Thyroid gland (tissue), 4 donors: ENCODE measurements at regions of chr5 and their contacts with region 1.

Region 1: DNA sequence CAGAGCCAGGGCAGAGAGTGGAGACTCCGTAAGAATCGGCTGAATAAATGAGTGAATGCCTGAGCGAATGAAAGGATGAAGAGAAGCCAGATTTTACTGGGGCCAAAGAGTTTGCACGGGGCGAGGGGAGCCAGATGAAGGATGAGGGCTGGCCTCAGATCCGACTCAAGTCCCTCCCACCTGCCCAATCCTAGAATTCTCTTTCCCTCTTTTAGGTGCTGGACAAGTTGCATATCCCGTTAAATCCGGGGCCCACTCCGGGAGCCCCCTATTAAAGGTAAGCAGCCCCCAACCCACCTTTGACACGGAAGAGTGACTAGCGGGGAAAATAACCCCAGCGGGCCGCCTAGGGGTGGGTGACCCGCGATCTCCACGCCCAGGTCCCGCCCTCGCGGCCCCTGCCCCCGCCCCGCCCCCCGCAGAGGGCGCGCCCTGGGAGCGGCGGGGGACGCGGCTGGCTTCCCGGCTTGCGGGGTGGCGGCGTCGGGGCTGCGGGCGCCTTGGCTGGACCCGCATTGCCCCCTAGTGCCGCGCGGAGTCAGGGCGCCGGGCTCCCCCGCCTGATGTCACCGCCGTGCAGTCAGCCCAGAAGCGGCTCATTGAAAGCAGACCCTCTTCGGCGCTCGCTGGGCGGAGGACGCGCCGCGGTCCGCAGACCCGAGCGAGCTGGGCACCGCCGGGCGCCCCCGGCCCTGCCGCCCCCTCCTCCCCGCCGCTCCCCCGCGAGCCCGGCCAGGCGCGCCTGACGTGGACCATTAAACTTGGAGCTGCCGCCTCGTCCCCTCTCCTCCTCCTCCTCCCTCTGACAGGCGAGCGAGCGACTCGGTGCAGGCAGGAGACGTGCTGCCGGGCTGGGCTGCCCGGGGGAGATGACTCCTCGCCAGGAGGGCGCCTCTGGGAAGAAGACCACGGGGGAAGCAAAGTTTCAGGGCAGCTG is at the start of gene ADRA1B:
- DNase-seq: peak; percentile 80 to 84
- H3K4me3 ChIP-seq: peak within 1 kb of the TSS in 1 of 3 donors; percentile 26
- H3K27ac ChIP-seq: no peak within 1 kb of the TSS
- H3K4me1 ChIP-seq: peaks cover 6 to 11% of the 10 kb centered on the region in 2 donors
- H3K27me3 ChIP-seq: no peaks in the 10 kb centered on the region
- CTCF ChIP-seq: peak in 5 of 6 experiments; percentile 17 to 90 (median 74)
- POLR2A ChIP-seq: no peak
- total RNA-seq, gene ADRA1B: 1.2 to 13.2 (median 3.1) TPM

Region 2: GRCh38 chr5:159515909-159516415 is 400.2 kb before region 1 on chr5:
- intact Hi-C with region 1: loop called (anchors 10 kb)
- DNase-seq: peak; percentile 68 to 82
- H3K4me3 ChIP-seq: no peak overlapping the region
- H3K27ac ChIP-seq: no peak overlapping the region
- H3K4me1 ChIP-seq: peaks cover 24 to 27% of the 10 kb centered on the region in 2 donors
- H3K27me3 ChIP-seq: no peaks in the 10 kb centered on the region
- CTCF ChIP-seq: peak; percentile 20 to 93 (median 74)
- POLR2A ChIP-seq: no peak